ENCODE measurements at regions of chr19 and their contacts with region 1.

Region 1: GRCh38 chr19:16185123-16185767 is at the start of gene FAM32A:
- DNase-seq: peak; percentile 97 to 99
- H3K4me3 ChIP-seq: peak within 1 kb of the TSS; percentile 79
- H3K4me1 ChIP-seq: no peaks in the 10 kb centered on the region
- H3K27me3 ChIP-seq: no peaks in the 10 kb centered on the region

Region 2: DNA sequence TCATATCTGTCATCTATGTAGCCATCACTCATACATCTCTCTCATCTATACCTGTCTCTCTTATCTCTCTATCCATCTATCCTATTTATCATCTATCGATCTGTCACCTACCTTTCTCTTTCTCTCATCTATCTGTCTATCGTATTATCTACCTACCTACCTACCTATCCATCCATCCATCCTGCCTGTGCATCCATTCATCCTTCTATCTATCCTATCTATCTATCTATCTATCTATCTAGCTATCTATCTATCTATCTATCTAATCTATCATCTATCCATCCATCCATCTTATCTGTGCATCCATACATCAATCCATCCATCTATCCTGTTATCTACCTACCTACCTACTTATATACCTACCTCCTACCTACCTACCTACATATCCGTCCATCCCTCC is 614.8 kb before region 1 on chr19:
- in situ Hi-C with region 1: no loop called
- DNase-seq: no peak
- H3K4me3 ChIP-seq: no peak overlapping the region
- H3K4me1 ChIP-seq: no peaks in the 10 kb centered on the region
- H3K27me3 ChIP-seq: 0 out of 2 replicates have a peak, but pooled peaks cover 3% of the 10 kb centered on the region

Region 3: GRCh38 chr19:16041299-16041990 is 143.8 kb before region 1 on chr19:
- in situ Hi-C with region 1: loop called (anchors 5 kb)
- DNase-seq: peak; percentile 41 to 91
- H3K4me3 ChIP-seq: no peak overlapping the region
- H3K4me1 ChIP-seq: no peaks in the 10 kb centered on the region; the same call in 1 of the 2 replicates
- H3K27me3 ChIP-seq: no peaks in the 10 kb centered on the region

Region 4: GRCh38 chr19:16143399-16144245 is 41.6 kb before region 1 on chr19 and contains the start of gene HSH2D:
- in situ Hi-C with region 1: no loop called
- DNase-seq: no peak
- H3K4me3 ChIP-seq: no peak within 1 kb of the TSS
- H3K4me1 ChIP-seq: no peaks in the 10 kb centered on the region
- H3K27me3 ChIP-seq: no peaks in the 10 kb centered on the region

Region 5: DNA sequence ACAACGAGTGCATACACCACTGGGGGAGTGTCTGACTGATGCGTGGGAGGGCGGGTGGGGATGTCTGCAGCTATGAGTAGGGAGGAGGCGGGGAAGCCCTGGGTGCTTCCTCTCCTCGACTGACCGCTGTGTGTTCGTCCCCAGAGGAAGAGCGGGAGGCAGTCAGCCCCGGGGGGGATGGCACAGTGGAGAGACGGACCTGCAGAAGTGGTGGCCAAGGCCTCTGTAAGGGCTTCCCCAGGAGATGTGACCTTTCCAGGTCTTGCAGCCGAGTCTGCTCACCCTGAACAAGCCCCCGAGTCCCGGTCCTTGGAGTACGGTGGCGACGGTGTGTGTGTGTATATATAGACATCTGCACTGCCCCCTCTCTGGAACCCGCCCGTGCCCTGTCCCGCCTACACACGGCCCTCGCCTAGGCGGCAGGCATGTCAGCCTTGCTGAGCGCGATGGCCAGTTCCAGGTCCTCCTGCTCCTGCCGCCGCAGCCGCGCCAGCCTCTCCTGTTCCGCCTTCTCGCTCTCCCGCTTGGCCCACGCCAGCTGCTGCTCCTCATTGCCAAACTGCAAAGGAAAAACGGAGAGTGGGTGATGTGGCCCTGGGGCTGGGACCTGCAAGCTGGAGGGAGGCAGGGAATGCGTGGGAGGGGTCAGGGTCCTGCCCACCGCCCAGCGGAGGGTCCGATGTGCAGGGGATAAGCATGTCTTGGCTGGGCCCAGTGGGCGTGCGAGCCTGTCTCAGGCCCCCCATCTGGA is 170.2 kb after region 1 on chr19:
- in situ Hi-C with region 1: no loop called
- DNase-seq: no peak
- H3K4me3 ChIP-seq: no peak overlapping the region
- H3K4me1 ChIP-seq: no peaks in the 10 kb centered on the region
- H3K27me3 ChIP-seq: no peaks in the 10 kb centered on the region

Measured in HAP-1 (cell line).